Prostate gland (tissue), 2 donors: ENCODE measurements at regions of chr15 and their contacts with region 1.

Region 1: GRCh38 chr15:95590533-95591044 is 739.9 kb upstream of the NR2F2 start:
- DNase-seq: no peak
- H3K4me3 ChIP-seq: no peak overlapping the region
- H3K27ac ChIP-seq: no peak overlapping the region
- H3K4me1 ChIP-seq: no peaks in the 10 kb centered on the region
- H3K27me3 ChIP-seq: no peaks in the 10 kb centered on the region
- CTCF ChIP-seq: no peak
- POLR2A ChIP-seq: no peak

Region 2: GRCh38 chr15:95464509-95464908 is 126.1 kb before region 1 on chr15:
- intact Hi-C with region 1: loop called (anchors 10 kb)
- DNase-seq: no peak
- H3K4me3 ChIP-seq: no peak overlapping the region
- H3K27ac ChIP-seq: no peak overlapping the region
- H3K4me1 ChIP-seq: no peaks in the 10 kb centered on the region
- H3K27me3 ChIP-seq: no peaks in the 10 kb centered on the region
- CTCF ChIP-seq: no peak
- POLR2A ChIP-seq: no peak